T-cell (primary cell): ENCODE measurements at regions of chr12 and their contacts with region 1.

Region 1: GRCh38 chr12:30862486-30862885 is 64.1 kb upstream of the TSPAN11 start:
- DNase-seq: no peak
- ATAC-seq: no peak
- H3K4me3 ChIP-seq: no peak overlapping the region
- H3K4me3 Mint-ChIP-seq: no peak overlapping the region
- H3K27ac ChIP-seq: no peak overlapping the region
- H3K27ac Mint-ChIP-seq: no peak overlapping the region
- H3K4me1 ChIP-seq: no peaks in the 10 kb centered on the region
- H3K4me1 Mint-ChIP-seq: no peaks in the 10 kb centered on the region
- H3K27me3 ChIP-seq: peaks cover 0 to 6% of the 10 kb centered on the region in 2 experiments
- H3K27me3 Mint-ChIP-seq: peaks cover 7 to 36% of the 10 kb centered on the region in 2 donors

Region 2: GRCh38 chr12:31238764-31239387 is 376.4 kb after region 1 on chr12:
- CTCF ChIA-PET with region 1: no interaction called
- POLR2A ChIA-PET with region 1: no interaction called
- DNase-seq: peak in 30 of 35 experiments; percentile 5 to 53 (median 34)
- ATAC-seq: peak; percentile 54 to 72 (median 60)
- H3K4me3 ChIP-seq: no peak overlapping the region
- H3K4me3 Mint-ChIP-seq: no peak overlapping the region
- H3K27ac ChIP-seq: no peak overlapping the region
- H3K27ac Mint-ChIP-seq: no peak overlapping the region
- H3K4me1 ChIP-seq: no peaks in the 10 kb centered on the region
- H3K4me1 Mint-ChIP-seq: peaks cover 0 to 5% (median 2%) of the 10 kb centered on the region in 3 donors
- H3K27me3 ChIP-seq: peaks cover 0 to 13% of the 10 kb centered on the region in 2 experiments
- H3K27me3 Mint-ChIP-seq: peaks cover 17 to 19% of the 10 kb centered on the region in 2 donors

Region 3: GRCh38 chr12:32603858-32604257 is 1741.4 kb after region 1 on chr12:
- CTCF ChIA-PET with region 1: interaction called in 1 of 2 experiments, 10 read pairs
- POLR2A ChIA-PET with region 1: no interaction called
- DNase-seq: no peak
- ATAC-seq: peak in 1 of 4 experiments; percentile 23
- H3K4me3 ChIP-seq: no peak overlapping the region
- H3K4me3 Mint-ChIP-seq: no peak overlapping the region
- H3K27ac ChIP-seq: no peak overlapping the region
- H3K27ac Mint-ChIP-seq: no peak overlapping the region
- H3K4me1 ChIP-seq: no peaks in the 10 kb centered on the region
- H3K4me1 Mint-ChIP-seq: no peaks in the 10 kb centered on the region
- H3K27me3 ChIP-seq: no peaks in the 10 kb centered on the region
- H3K27me3 Mint-ChIP-seq: no peaks in the 10 kb centered on the region